CD4-positive, alpha-beta memory T cell (primary cell): ENCODE measurements at regions of chr1 and their contacts with region 1.

Region 1: GRCh38 chr1:108643492-108644335 is 17.2 kb downstream of the HENMT1 start:
- DNase-seq: peak; percentile 57 to 73 (median 69)
- H3K4me3 ChIP-seq: no peak overlapping the region
- H3K4me3 Mint-ChIP-seq: peak overlapping the region in 7 of 8 donors; percentile 4 to 52 (median 17)
- H3K27ac ChIP-seq: peak overlapping the region; percentile 57
- H3K27ac Mint-ChIP-seq: peak overlapping the region; percentile 91 to 99 (median 98)
- H3K4me1 ChIP-seq: peaks cover 64% of the 10 kb centered on the region
- H3K4me1 Mint-ChIP-seq: peaks cover 59 to 76% (median 68%) of the 10 kb centered on the region in 4 donors
- H3K27me3 ChIP-seq: no peaks in the 10 kb centered on the region
- H3K27me3 Mint-ChIP-seq: no peaks in the 10 kb centered on the region

Region 2: DNA sequence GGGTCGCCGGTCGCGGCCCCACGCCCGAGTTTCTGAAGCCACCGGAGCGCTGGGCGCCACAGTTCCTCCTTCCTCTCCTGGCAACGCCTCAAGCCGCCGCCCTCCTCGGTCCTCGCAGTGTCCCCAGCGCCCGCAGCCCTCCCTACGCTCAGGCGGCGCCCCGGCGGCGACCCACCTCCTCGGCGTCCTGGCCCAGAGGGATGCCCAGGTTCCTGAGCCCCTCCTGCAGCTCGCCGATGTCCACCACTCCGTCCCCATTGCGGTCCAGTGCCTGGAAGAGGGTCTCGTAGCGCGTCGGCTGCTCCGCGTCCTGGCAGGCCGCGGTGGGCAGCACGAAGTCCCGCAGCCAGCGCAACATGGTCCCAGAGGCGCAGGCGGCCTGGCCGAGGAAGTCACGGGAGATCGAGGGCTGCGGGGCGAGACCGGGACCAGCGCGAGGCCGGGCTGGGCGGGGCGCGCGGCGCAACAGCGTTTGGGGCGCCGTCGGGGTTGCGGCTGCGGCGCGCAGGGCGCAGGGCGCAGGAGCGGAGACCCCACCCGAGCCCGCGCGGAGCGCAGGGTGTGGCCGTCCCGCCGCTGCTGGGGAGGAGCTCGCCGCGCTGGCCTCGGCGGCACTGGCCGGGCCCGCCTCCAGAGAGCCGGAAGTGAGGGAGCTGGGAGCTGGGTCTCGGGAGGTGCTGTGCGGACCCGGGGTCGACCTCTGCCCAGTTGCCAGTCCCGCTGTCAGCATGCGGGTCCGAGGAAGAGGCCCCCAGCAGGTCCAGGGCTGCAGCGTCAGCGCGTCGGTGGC is 443.7 kb before region 1 on chr1 and contains the start of gene SLC25A24:
- CTCF ChIA-PET with region 1: interaction called, 3 read pairs
- POLR2A ChIA-PET with region 1: interaction called, 13 read pairs
- intact Hi-C with region 1: loop called (anchors 5 kb)
- DNase-seq: peak; percentile 72 to 82 (median 78)
- H3K4me3 ChIP-seq: peak within 1 kb of the TSS; percentile 58 to 80
- H3K4me3 Mint-ChIP-seq: peak within 1 kb of the TSS; percentile 87 to 94 (median 92)
- H3K27ac ChIP-seq: peak within 1 kb of the TSS; percentile 64
- H3K27ac Mint-ChIP-seq: peak within 1 kb of the TSS; percentile 85 to 93 (median 90)
- H3K4me1 ChIP-seq: peaks cover 23% of the 10 kb centered on the region
- H3K4me1 Mint-ChIP-seq: peaks cover 31 to 45% (median 37%) of the 10 kb centered on the region in 4 donors
- H3K27me3 ChIP-seq: no peaks in the 10 kb centered on the region
- H3K27me3 Mint-ChIP-seq: no peaks in the 10 kb centered on the region
- total RNA-seq, gene SLC25A24: 18.6 to 19.1 TPM

Region 3: GRCh38 chr1:108570128-108570527 is 73.6 kb before region 1 on chr1:
- CTCF ChIA-PET with region 1: interaction called, 11 read pairs
- POLR2A ChIA-PET with region 1: no interaction called
- intact Hi-C with region 1: no loop called
- DNase-seq: peak in 4 of 5 donors; percentile 19 to 39 (median 32)
- H3K4me3 ChIP-seq: no peak overlapping the region
- H3K4me3 Mint-ChIP-seq: no peak overlapping the region
- H3K27ac ChIP-seq: no peak overlapping the region
- H3K27ac Mint-ChIP-seq: no peak overlapping the region
- H3K4me1 ChIP-seq: peaks cover 13% of the 10 kb centered on the region
- H3K4me1 Mint-ChIP-seq: peaks cover 0 to 7% (median 4%) of the 10 kb centered on the region in 4 donors
- H3K27me3 ChIP-seq: no peaks in the 10 kb centered on the region
- H3K27me3 Mint-ChIP-seq: no peaks in the 10 kb centered on the region

Region 4: DNA sequence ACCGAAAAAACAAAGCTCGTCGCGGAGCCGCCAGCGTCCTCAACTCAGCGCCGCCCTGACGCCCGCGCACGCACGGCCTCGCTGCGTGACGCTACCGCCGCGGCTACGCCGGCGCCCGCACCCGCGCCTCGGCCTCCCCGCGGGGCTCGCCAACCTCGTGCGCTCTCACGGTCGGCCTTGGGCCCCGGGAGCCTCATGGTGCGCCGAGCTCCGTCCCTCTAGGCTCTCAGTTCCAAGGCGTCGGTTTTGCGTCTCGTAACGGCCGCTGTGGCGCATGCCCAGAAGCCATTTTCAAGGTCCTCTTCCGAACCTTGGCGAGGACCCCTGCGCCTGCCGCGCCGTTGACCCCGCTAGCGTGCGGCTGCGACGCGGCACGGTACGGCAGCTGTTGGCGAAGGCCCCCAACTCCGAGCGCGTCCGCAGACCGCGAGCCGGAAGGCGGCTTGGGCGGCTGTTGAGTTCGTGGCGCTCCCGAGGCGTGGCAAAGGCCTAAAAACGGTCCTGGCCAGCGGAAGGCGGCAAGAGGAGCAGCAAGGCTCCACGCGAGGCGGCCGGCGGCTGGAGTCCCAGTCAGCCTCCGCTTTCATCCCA is 17.4 kb after region 1 on chr1 and contains the start of gene HENMT1:
- CTCF ChIA-PET with region 1: interaction called, 123 read pairs
- POLR2A ChIA-PET with region 1: interaction called, 536 read pairs
- intact Hi-C with region 1: loop called (anchors 1 kb)
- DNase-seq: peak; percentile 88 to 90 (median 88)
- H3K4me3 ChIP-seq: peak within 1 kb of the TSS; percentile 47 to 79
- H3K4me3 Mint-ChIP-seq: peak within 1 kb of the TSS; percentile 80 to 88 (median 86)
- H3K27ac ChIP-seq: peak within 1 kb of the TSS; percentile 97
- H3K27ac Mint-ChIP-seq: peak within 1 kb of the TSS; percentile 96 to 98 (median 98)
- H3K4me1 ChIP-seq: peaks cover 25% of the 10 kb centered on the region
- H3K4me1 Mint-ChIP-seq: peaks cover 18 to 41% (median 29%) of the 10 kb centered on the region in 4 donors
- H3K27me3 ChIP-seq: no peaks in the 10 kb centered on the region
- H3K27me3 Mint-ChIP-seq: no peaks in the 10 kb centered on the region
- total RNA-seq, gene HENMT1: 19.1 to 19.3 TPM

Region 5: DNA sequence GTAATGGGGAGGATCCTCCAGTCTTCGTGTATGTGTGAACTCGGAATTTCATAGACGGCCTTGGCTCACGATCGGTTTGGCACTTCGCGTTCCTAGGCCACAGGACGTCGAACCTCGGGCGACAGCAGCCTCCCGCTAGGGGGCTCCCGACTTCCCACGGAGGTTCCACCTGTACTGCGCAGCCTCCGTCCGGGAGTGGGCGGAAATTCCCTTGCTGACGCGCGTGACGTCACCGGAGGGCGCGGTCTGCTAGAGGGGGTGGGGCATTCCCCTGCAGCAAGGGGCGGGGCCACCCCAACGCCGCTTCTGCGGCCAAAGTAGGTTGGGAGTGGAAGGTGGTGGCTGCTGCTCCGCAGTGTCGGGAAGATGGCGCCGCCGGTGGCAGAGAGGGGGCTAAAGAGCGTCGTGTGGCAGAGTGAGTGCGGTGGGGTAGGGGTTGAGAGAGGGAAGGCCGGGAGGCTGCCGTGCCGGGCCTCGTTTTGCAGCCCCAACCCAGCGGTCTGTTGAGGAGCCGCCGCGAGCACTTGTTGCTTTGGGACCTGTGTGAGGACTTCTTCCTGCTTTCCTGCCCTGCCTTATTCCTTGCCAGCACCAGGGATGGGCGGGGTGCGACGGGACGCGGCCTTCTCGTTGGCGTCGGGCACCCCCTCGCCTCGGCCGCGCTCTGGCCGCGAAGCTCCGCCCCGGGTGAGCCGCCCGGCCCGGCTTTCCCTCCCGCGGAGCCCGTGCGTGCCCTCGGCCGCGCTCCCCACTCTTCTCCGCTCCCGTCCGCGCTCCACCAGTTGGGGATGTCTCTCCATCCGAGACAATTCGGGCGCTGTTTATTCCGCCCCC is 102.9 kb after region 1 on chr1 and contains the start of gene STXBP3:
- CTCF ChIA-PET with region 1: no interaction called
- POLR2A ChIA-PET with region 1: interaction called, 5 read pairs
- intact Hi-C with region 1: loop called (anchors 1 kb)
- DNase-seq: peak; percentile 98 to 99 (median 99)
- H3K4me3 ChIP-seq: peak within 1 kb of the TSS; percentile 57 to 85
- H3K4me3 Mint-ChIP-seq: peak within 1 kb of the TSS; percentile 94 to 100 (median 99)
- H3K27ac ChIP-seq: peak within 1 kb of the TSS; percentile 95
- H3K27ac Mint-ChIP-seq: peak within 1 kb of the TSS; percentile 94 to 100 (median 99)
- H3K4me1 ChIP-seq: peaks cover 41% of the 10 kb centered on the region
- H3K4me1 Mint-ChIP-seq: peaks cover 25 to 47% (median 34%) of the 10 kb centered on the region in 4 donors
- H3K27me3 ChIP-seq: no peaks in the 10 kb centered on the region
- H3K27me3 Mint-ChIP-seq: no peaks in the 10 kb centered on the region
- total RNA-seq, gene STXBP3: 90.9 to 92.5 TPM